ENCODE measurements at regions of chr2 and their contacts with region 1.

Region 1: GRCh38 chr2:206159346-206160124 is at the starts of genes EEF1B2 and NDUFS1:
- DNase-seq: peak; percentile 99
- H3K4me3 ChIP-seq: peak within 1 kb of the TSS; percentile 89
- H3K27ac ChIP-seq: peak within 1 kb of the TSS; percentile 90
- H3K4me1 ChIP-seq: peaks cover 14% of the 10 kb centered on the region
- H3K27me3 ChIP-seq: no peaks in the 10 kb centered on the region
- CTCF ChIP-seq: no peak
- total RNA-seq, gene EEF1B2: 565 and 629 TPM in 2 replicates
- total RNA-seq, gene NDUFS1: 134 and 151 TPM in 2 replicates

Region 2: DNA sequence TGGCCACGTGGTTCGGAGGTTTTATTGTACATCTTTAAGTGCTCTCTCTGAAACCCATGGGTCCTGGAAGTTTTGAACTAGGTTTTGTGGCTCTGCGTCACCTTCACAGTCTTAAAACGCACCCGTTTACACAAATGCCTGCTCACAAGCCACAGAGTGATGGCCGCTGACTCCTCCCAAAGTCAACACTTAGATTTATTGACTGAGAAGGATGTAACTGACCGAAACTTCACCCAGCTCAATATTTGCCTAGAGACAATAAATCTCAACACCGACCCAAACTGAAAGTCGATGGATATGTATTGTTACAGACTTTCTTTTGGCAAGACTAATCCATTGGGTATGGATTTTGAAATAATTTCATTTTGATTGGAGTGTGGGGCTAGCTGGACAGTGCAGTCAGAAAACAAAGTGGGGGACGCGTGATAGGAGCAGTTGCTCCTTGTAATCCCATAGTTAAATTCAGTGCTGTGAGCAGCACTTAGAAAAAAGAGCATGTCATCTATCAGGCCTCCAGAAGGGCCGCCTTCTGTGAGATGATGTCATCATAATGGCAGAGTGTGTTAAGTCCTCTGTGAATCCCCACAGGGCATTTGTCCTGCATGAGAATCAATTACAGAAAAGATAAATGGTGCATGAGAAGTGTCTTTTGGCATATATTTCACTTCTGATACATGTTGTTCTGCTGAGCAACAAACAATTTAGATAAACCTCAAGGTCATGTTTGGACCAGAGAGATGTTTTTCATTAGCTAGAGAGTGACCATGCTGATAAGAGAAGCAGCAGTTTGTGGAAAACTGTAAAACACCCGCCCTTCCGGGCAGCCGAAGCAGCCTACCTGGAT is 257.3 kb before region 1 on chr2:
- CTCF ChIA-PET with region 1: no interaction called
- POLR2A ChIA-PET with region 1: no interaction called
- intact Hi-C with region 1: no loop called
- DNase-seq: peak; percentile 10
- H3K4me3 ChIP-seq: no peak overlapping the region
- H3K27ac ChIP-seq: no peak overlapping the region
- H3K4me1 ChIP-seq: no peaks in the 10 kb centered on the region
- H3K27me3 ChIP-seq: no peaks in the 10 kb centered on the region
- CTCF ChIP-seq: no peak

Region 3: GRCh38 chr2:206004004-206004693 is 155.4 kb before region 1 on chr2:
- CTCF ChIA-PET with region 1: no interaction called
- POLR2A ChIA-PET with region 1: no interaction called
- intact Hi-C with region 1: loop called (anchors 10 kb)
- DNase-seq: peak; percentile 46
- H3K4me3 ChIP-seq: no peak overlapping the region
- H3K27ac ChIP-seq: no peak overlapping the region
- H3K4me1 ChIP-seq: peaks cover 30% of the 10 kb centered on the region
- H3K27me3 ChIP-seq: no peaks in the 10 kb centered on the region
- CTCF ChIP-seq: peak; percentile 61

Region 4: GRCh38 chr2:206085742-206086445 is 73.6 kb before region 1 on chr2 and contains the start of gene INO80D:
- CTCF ChIA-PET with region 1: no interaction called
- POLR2A ChIA-PET with region 1: interaction called, 10 read pairs
- intact Hi-C with region 1: loop called (anchors 2 kb)
- DNase-seq: peak; percentile 90
- H3K4me3 ChIP-seq: peak within 1 kb of the TSS; percentile 65
- H3K27ac ChIP-seq: peak within 1 kb of the TSS; percentile 99
- H3K4me1 ChIP-seq: peaks cover 17% of the 10 kb centered on the region
- H3K27me3 ChIP-seq: no peaks in the 10 kb centered on the region
- CTCF ChIP-seq: peak; percentile 61
- total RNA-seq, gene INO80D: 20.9 and 21.7 TPM in 2 replicates

Region 5: DNA sequence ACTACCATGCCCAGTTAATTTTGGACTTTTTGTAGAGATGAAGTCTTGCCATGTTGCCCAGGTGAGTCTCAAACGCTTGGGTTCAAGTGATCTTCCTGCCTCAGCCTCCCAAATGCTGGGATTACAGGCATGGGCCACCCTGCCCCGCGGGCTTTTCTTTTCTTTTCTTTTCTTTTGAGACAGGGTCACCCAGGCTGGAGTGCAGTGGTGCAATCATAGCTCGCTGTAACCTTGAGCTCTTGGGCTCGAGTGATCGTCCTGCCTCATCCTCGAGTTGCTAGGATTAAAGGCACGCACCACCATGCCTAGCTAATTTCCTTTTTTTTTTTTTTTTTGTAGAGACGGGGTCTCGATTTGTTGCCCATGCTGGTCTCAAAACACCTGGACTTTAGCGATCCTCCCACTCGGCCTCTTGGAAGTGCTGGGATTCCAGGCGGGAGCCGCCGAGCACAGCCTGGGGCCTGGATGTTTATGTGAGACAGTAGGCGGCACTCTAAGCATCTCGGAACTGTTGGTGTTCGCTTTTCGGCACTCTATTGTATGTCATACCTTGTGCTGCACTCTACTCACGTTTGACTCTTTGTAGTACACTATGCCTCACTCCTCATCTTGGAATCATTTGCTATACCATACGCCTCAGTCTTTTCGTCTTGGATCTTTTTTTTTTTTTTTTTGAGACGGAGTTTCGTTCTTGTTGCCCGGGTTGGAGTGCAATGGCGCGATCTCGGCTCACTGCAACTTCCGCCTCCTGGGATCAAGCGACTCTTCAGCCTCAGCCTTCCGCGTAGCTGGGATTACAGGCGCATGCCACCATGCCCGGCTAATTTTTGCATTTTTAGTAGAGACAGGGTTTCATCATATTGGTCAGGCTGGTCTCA is 90.4 kb after region 1 on chr2:
- CTCF ChIA-PET with region 1: no interaction called
- POLR2A ChIA-PET with region 1: interaction called, 15 read pairs
- intact Hi-C with region 1: no loop called
- DNase-seq: peak; percentile 49
- H3K4me3 ChIP-seq: peak overlapping the region; percentile 31
- H3K27ac ChIP-seq: no peak overlapping the region
- H3K4me1 ChIP-seq: no peaks in the 10 kb centered on the region
- H3K27me3 ChIP-seq: peaks cover 36% of the 10 kb centered on the region
- CTCF ChIP-seq: peak; percentile 40; the same call in 1 of the 2 replicates

Region 6: DNA sequence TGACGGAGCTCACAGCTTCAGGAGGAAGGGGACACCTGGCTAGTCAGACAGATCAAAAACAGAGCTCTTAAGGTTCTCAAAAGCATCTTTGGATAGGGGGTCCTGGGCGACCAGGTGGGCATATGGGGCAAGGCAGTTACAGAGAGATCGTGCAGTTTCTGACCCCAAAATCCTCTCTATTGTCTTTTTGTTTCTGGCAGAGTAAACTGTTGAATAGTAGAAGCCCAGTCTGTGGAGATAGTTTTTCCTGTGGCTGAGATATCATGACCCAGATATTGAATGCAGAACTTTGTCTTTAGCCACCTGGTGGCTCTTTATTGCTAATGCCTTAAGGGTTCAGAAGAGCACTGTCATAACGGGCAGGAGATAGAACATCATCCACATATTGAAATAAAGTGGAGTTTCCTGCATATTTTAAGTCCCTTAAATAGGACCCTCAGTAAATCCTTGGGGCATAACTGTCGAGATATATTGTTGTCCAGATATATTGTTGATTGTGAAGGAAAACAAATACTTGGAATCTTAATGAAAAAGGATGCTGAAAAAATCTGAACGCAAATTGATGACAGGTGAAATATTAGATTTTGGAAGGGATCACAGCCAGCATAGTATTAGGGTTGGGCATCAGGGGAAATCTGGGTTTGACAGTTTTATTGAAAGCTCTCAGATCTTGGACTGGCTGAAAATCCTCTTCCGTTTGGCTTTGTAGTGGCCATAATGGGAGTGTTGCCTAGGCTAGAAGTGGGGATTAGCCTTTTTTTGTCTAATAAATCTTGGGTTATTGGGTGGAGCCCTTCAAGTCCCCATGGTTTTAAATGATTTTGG is 100.9 kb after region 1 on chr2:
- CTCF ChIA-PET with region 1: no interaction called
- POLR2A ChIA-PET with region 1: no interaction called
- intact Hi-C with region 1: loop called (anchors 10 kb)
- DNase-seq: peak; percentile 31
- H3K4me3 ChIP-seq: no peak overlapping the region
- H3K27ac ChIP-seq: no peak overlapping the region
- H3K4me1 ChIP-seq: no peaks in the 10 kb centered on the region
- H3K27me3 ChIP-seq: peaks cover 92% of the 10 kb centered on the region
- CTCF ChIP-seq: peak; percentile 45; the same call in 1 of the 2 replicates

Region 7: GRCh38 chr2:206289391-206289790 is 129.9 kb after region 1 on chr2:
- CTCF ChIA-PET with region 1: no interaction called
- POLR2A ChIA-PET with region 1: no interaction called
- intact Hi-C with region 1: no loop called
- DNase-seq: no peak
- H3K4me3 ChIP-seq: no peak overlapping the region
- H3K27ac ChIP-seq: no peak overlapping the region
- H3K4me1 ChIP-seq: no peaks in the 10 kb centered on the region
- H3K27me3 ChIP-seq: peaks cover 3% of the 10 kb centered on the region
- CTCF ChIP-seq: no peak

Region 8: GRCh38 chr2:206442833-206443734 is 283.5 kb after region 1 on chr2 and contains the start of gene ADAM23:
- CTCF ChIA-PET with region 1: no interaction called
- POLR2A ChIA-PET with region 1: no interaction called
- intact Hi-C with region 1: loop called (anchors 5 kb)
- DNase-seq: peak; percentile 50
- H3K4me3 ChIP-seq: peak within 1 kb of the TSS; percentile 19
- H3K27ac ChIP-seq: no peak within 1 kb of the TSS
- H3K4me1 ChIP-seq: no peaks in the 10 kb centered on the region
- H3K27me3 ChIP-seq: peaks cover 79% of the 10 kb centered on the region
- CTCF ChIP-seq: peak; percentile 33; the same call in 1 of the 2 replicates
- total RNA-seq, gene ADAM23: 0.21 and 0.44 TPM in 2 replicates

Region 9: DNA sequence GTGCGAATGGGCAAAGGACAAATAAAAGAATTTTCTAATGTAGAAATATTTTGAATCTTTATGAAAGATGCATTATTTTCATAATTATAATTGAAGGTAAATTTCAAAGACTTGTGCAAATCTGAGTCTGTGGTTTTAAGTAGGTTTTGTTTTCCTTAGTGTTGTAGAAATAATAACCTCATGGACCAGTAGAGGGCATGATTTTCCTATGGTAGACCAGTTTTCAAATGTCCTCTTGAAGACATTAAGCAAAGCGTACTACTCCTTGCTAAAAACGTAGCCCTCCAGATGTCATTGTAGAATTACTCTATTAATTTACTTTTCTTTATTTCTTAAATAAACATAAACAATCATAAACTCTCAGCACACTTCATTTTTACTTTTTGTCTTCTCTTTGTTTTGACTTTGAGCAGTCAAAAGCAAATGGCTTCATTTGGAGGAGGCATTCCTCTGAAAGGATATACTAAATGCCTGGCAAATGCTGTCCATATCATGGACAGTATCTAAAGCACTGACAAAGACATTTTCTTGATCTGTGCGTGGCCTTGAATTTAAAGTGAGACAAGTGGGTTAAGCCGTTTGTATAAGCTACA is 396.9 kb after region 1 on chr2:
- CTCF ChIA-PET with region 1: no interaction called
- POLR2A ChIA-PET with region 1: no interaction called
- intact Hi-C with region 1: loop called (anchors 5 kb)
- DNase-seq: peak; percentile 51
- H3K4me3 ChIP-seq: no peak overlapping the region
- H3K27ac ChIP-seq: no peak overlapping the region
- H3K4me1 ChIP-seq: no peaks in the 10 kb centered on the region
- H3K27me3 ChIP-seq: peaks cover 21% of the 10 kb centered on the region
- CTCF ChIP-seq: peak; percentile 73

Region 10: DNA sequence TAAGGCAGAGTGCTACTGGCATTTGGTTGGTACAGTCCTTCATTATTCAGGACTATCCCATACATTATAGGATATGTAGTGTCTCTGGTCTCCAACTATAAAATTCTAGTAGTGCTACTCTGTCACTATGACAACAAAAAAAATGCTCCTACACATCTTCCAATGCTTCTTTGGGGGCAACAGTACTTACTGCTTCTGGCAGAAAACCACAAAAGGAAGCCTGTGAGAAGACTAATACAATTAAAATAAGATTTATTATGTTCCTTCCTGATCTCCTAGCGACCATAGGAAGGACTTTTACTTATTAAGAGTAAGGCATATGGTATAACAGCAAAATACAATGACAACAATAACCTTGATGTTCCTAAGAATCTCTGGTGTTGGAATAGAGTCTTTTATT is 731.4 kb after region 1 on chr2:
- CTCF ChIA-PET with region 1: no interaction called
- POLR2A ChIA-PET with region 1: no interaction called
- intact Hi-C with region 1: no loop called
- DNase-seq: peak; percentile 4
- H3K4me3 ChIP-seq: no peak overlapping the region
- H3K27ac ChIP-seq: no peak overlapping the region
- H3K4me1 ChIP-seq: no peaks in the 10 kb centered on the region
- H3K27me3 ChIP-seq: no peaks in the 10 kb centered on the region
- CTCF ChIP-seq: no peak